Dorsolateral prefrontal cortex (tissue), 120 donors: ENCODE measurements at regions of chr3 and their contacts with region 1.

Region 1: DNA sequence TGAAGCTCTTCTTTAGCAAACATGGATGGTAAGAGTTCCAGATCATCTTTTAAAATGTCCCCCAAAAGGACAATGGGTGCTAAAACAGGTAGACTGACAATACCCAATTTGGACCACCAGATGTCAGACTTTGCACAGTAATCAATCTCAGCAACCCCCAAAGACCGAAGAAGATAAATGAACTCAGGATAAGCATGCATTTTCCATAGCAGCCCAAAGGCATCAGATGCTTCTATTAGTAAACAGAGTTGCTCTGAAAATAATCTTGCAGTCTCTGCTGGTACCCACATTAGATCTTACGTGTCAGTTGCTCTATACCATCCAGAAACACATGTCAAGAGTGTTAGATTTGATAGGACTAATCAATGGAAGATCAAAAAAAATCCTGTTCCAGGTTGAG is 20.6 kb downstream of the MYH15 start:
- DNase-seq: peak in 1 of 10 donors; percentile 51
- H3K4me3 ChIP-seq: no peak overlapping the region
- H3K27ac ChIP-seq: peak overlapping the region in 1 of 59 donors; percentile 8
- H3K27me3 ChIP-seq: no peaks in the 10 kb centered on the region
- CTCF ChIP-seq: peak; percentile 60 to 96 (median 88)

Region 2: DNA sequence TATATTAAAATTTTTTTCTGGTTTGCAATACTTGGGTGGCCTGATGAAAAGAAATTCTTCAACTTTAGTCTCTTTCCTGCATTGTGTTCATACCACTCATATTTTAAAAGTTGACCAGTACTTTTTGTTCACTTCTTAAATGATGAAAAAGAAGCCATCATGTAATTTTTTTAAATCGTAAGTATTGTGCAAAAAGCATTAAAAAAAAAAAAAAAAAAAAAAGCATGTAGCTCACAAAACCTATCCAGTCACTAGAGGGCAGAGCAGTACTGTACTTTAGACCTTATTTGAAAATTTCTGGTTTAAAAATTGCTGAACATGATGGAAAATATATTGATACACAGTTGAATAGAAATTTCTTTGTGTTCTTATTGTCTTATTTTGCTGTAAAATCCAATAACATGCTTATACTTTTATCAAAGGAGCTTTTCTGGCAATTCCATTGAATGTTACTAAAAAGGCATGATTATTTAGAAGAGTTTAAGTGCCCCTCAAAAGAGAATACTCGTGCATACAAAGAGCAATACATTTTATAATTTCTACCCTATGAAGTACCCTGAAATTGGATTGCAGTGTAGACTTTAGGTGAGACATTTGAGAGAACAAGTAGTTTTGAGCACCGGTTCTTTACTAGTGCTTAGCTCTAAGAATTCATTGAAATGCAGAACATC is 829.3 kb before region 1 on chr3:
- intact Hi-C with region 1: loop called in 1 of 2 experiments (anchors 10 kb)
- DNase-seq: no peak
- H3K4me3 ChIP-seq: peak overlapping the region in 10 of 59 donors; percentile 1 to 24 (median 12)
- H3K27ac ChIP-seq: no peak overlapping the region
- H3K27me3 ChIP-seq: no peaks in the 10 kb centered on the region
- CTCF ChIP-seq: peak; percentile 49 to 84 (median 70)

Region 3: GRCh38 chr3:108036984-108037741 is 452.6 kb before region 1 on chr3:
- intact Hi-C with region 1: loop called in 1 of 2 experiments (anchors 10 kb)
- DNase-seq: peak in 1 of 10 donors; percentile 62
- H3K4me3 ChIP-seq: no peak overlapping the region
- H3K27ac ChIP-seq: peak overlapping the region in 40 of 59 donors; percentile 1 to 78 (median 28)
- H3K27me3 ChIP-seq: no peaks in the 10 kb centered on the region
- CTCF ChIP-seq: no peak

Region 4: GRCh38 chr3:108221911-108222852 is 267.6 kb before region 1 on chr3 and contains the start of gene IFT57:
- intact Hi-C with region 1: loop called in 1 of 2 experiments (anchors 10 kb)
- DNase-seq: peak; percentile 97 to 99 (median 99)
- H3K4me3 ChIP-seq: peak within 1 kb of the TSS; percentile 70 to 98 (median 86)
- H3K27ac ChIP-seq: peak within 1 kb of the TSS in 58 of 59 donors; percentile 11 to 90 (median 76)
- H3K27me3 ChIP-seq: no peaks in the 10 kb centered on the region
- CTCF ChIP-seq: peak in 17 of 56 donors; percentile 9 to 44 (median 23)
- total RNA-seq, gene IFT57: 22.4 to 63.6 (median 43.7) TPM

Region 5: DNA sequence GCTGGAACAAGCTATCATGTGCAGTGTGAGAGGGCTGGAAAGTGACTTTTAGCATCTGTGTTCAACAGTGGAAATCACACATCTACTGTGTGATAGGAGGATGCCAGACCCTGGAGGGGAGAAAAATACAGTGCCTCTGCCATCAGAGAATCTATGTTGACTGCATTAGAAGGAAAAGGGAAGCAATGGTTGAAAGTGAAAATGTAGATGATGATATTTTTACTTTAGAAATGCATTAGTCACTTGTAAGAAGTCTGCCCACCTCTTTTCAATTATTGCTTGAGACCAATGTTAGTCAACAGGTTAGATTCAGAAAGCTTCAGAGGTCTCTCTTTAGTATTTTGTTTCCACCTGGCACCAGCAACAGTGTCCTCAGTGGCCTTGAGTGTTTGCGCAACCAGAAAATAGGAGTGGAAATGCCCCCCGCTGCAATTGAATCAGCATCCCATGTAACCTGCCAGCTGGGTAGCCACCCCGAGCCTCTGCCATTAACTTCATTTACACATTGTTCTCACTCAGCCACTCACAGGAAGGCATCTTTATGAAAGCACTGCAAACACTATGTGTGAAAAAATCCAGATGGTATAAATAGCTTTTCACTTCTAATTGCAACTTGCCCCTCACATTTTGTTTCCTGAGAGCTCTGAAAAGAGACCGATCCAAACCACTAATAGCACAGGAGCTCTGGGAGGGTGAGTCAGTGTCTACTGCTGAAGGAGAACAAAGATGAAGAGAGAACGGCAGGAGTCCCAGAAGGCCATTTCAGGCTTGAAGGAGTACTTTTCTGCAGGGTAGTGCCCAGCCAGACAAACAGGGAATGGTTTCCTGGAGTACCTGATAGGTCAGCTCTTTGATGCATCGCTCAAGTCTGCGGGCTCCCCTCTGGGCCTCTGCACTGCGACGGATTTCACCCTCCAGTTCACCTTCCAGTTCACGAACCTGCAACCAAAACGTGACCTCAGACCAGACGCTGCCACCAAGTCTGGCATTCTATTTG is 101.3 kb before region 1 on chr3:
- intact Hi-C with region 1: no loop called
- DNase-seq: peak in 6 of 10 donors; percentile 26 to 53 (median 42)
- H3K4me3 ChIP-seq: no peak overlapping the region
- H3K27ac ChIP-seq: peak overlapping the region in 13 of 59 donors; percentile 0 to 51 (median 18)
- H3K27me3 ChIP-seq: no peaks in the 10 kb centered on the region
- CTCF ChIP-seq: no peak

Region 6: GRCh38 chr3:108552267-108553159 is 62.7 kb after region 1 on chr3:
- intact Hi-C with region 1: loop called (anchors 2 to 5 kb)
- DNase-seq: no peak
- H3K4me3 ChIP-seq: no peak overlapping the region
- H3K27ac ChIP-seq: no peak overlapping the region
- H3K27me3 ChIP-seq: no peaks in the 10 kb centered on the region
- CTCF ChIP-seq: peak; percentile 46 to 88 (median 68)

Region 7: DNA sequence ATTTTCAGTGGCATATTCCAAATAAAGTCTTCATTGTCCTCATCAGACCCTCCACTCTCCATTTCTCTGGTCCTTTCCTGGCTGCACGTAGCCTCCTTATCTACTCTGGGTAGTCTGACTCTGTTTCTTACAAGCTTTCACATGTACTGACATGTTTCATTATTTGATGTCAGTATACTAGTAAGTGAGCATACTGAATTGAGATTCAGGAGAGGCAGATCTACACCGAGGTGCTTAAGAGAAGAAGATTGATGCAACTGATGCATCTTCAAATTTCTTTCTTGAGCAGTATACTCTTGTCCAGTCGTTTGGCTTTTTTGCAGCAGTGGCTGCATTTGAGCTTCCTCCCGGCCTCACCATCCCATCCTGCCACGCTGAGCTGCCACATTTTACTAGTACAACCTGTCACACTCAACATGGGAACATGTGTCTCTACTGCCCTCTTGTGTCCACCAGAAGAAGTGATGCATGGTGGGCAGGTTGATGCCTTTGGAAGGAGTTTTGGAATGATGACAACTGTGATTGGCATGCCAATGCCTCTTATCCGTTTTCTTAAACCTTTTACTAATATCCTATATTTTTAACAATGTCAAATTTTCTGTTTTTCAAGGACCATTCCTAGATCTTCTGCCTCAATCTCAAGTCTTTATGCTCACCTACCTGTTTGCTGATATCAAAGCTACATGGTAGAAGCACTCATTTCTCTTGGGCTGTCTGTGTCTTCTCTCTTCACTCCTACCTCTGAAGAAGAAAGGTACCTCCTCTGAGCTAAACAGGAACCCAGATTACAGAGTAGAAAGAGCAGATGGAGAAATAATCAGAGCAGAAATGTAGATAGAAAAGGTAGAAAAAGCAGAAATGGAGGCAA is 425.2 kb after region 1 on chr3:
- intact Hi-C with region 1: loop called in 1 of 2 experiments (anchors 5 kb)
- DNase-seq: peak in 8 of 10 donors; percentile 12 to 58 (median 44)
- H3K4me3 ChIP-seq: no peak overlapping the region
- H3K27ac ChIP-seq: no peak overlapping the region
- H3K27me3 ChIP-seq: peaks cover 0 to 6% (median 0%) of the 10 kb centered on the region in 45 donors
- CTCF ChIP-seq: peak; percentile 62 to 93 (median 85)